GM12878 (cell line): ENCODE measurements at regions of chr1 and their contacts with region 1.

Region 1: DNA sequence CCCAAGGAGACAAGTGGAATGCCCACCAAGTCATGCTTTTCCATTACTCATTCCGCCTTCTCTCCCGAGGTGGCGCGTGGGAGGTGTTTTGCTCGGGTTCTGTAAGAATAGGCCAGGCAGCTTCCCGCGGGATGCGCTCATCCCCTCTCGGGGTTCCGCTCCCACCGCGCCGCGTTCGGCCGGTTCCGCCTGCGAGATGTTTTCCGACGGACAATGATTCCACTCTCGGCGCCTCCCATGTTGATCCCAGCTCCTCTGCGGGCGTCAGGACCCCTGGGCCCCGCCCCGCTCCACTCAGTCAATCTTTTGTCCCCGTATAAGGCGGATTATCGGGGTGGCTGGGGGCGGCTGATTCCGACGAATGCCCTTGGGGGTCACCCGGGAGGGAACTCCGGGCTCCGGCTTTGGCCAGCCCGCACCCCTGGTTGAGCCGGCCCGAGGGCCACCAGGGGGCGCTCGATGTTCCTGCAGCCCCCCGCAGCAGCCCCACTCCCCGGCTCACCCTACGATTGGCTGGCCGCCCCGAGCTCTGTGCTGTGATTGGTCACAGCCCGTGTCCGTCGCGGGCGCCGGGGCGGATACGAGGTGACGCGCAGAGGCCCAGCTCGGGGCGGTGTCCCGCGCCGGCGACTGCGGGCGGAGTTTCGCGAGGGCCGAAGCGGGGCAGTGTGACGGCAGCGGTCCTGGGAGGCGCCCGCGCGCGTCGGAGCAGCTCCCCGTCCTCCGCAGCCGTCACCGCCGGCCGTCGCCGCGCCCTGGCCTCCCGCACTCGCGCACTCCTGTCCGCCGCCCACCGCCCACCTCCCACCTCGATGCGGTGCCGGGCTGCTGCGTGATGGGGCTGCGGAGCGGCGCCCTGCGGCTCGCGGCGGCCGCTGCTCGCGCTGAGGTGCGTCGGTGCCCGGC is at the start of gene KIF1B:
- DNase-seq: peak; percentile 87
- ATAC-seq: peak; percentile 99
- H3K4me3 ChIP-seq: peak within 1 kb of the TSS; percentile 90
- H3K27ac ChIP-seq: peak within 1 kb of the TSS; percentile 46
- H3K4me1 ChIP-seq: no peaks in the 10 kb centered on the region; the same call in 1 of the 2 replicates
- H3K27me3 ChIP-seq: no peaks in the 10 kb centered on the region
- CTCF ChIP-seq: peak; percentile 89 to 95 (median 95); a peak in 5 of 6 replicates
- EP300 ChIP-seq: no peak
- POLR2A ChIP-seq: peak; percentile 85
- RAD21 ChIP-seq: peak; percentile 65
- polyA plus RNA-seq, gene KIF1B: 2.1 to 2.2 TPM

Region 2: DNA sequence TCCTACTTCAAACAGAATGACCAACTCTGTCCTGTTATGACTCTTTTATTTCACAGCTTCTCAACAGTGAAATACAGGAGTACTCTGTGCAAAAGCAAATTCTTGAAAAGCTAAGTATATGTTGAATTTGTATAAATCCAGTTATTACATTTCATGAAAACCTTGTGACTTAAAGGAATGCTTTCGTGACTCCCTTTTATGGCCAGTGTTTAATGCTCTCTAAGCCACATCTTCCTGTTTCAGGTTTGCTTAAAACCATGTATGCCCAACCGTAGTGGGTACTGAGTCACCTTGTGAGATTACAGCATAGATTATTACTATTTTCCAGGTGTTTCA is 40.0 kb before region 1 on chr1:
- CTCF ChIA-PET with region 1: interaction called, 21 read pairs
- POLR2A ChIA-PET with region 1: no interaction called
- RAD21 ChIA-PET with region 1: interaction called, 10 read pairs
- SMC1A ChIA-PET with region 1: interaction called, 12 read pairs
- in situ Hi-C with region 1: no loop called
- intact Hi-C with region 1: no loop called
- DNase-seq: peak; percentile 75
- ATAC-seq: peak; percentile 78
- H3K4me3 ChIP-seq: no peak overlapping the region
- H3K27ac ChIP-seq: peak overlapping the region; percentile 83
- H3K4me1 ChIP-seq: peaks cover 31% of the 10 kb centered on the region
- H3K27me3 ChIP-seq: no peaks in the 10 kb centered on the region
- CTCF ChIP-seq: no peak
- EP300 ChIP-seq: peak; percentile 33 to 46; a peak in 2 of 4 replicates
- POLR2A ChIP-seq: no peak
- RAD21 ChIP-seq: no peak

Region 3: DNA sequence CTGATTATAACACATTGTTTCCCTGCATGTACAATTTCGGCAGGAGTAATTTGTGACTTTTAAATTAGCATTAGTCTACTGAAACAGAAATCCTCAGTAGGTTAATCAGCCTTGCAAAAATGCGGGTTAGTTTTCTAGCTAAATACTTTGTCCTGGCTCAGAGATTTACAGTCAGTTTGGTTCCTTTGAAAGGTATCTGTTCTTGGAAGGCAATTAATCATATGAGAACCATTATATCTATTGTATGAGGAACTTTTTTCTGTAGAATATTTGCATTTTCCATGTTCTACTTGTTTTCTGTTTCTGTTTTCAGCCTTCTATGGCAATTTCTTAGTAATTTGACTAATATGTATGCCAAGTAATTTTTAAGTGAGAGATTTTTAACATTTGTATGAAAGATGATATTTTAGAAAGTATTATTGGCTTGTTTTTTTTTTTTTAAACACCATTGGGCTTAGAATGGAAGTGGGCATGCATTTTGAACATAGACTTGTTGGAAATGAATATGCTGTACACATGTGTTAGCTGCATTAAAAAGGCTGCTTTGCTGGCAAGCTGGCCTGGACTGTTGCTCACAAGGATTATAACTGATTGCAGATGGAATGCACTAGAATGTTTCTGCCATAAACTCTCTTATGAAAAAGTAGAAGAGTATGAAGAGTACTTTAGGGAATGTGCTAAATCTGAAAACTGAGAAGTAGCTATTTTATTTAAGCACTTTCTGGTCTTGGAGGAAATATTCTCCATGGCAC is 26.4 kb after region 1 on chr1:
- CTCF ChIA-PET with region 1: interaction called, 19 read pairs
- POLR2A ChIA-PET with region 1: interaction called, 6 read pairs
- RAD21 ChIA-PET with region 1: interaction called, 12 read pairs
- SMC1A ChIA-PET with region 1: interaction called, 9 read pairs
- in situ Hi-C with region 1: no loop called
- intact Hi-C with region 1: no loop called
- DNase-seq: no peak
- ATAC-seq: peak; percentile 77
- H3K4me3 ChIP-seq: no peak overlapping the region
- H3K27ac ChIP-seq: peak overlapping the region; percentile 32; the same call in 1 of the 2 replicates
- H3K4me1 ChIP-seq: peaks cover 16% of the 10 kb centered on the region
- H3K27me3 ChIP-seq: no peaks in the 10 kb centered on the region
- CTCF ChIP-seq: no peak
- EP300 ChIP-seq: no peak
- POLR2A ChIP-seq: no peak
- RAD21 ChIP-seq: no peak

Region 4: GRCh38 chr1:10308001-10308400 is 97.8 kb after region 1 on chr1:
- CTCF ChIA-PET with region 1: interaction called, 13 read pairs
- POLR2A ChIA-PET with region 1: no interaction called
- RAD21 ChIA-PET with region 1: interaction called, 5 read pairs
- SMC1A ChIA-PET with region 1: no interaction called
- in situ Hi-C with region 1: no loop called
- intact Hi-C with region 1: no loop called
- DNase-seq: no peak
- ATAC-seq: no peak; the same call in 2 of the 3 replicates
- H3K4me3 ChIP-seq: no peak overlapping the region
- H3K27ac ChIP-seq: no peak overlapping the region
- H3K4me1 ChIP-seq: no peaks in the 10 kb centered on the region; the same call in 1 of the 2 replicates
- H3K27me3 ChIP-seq: no peaks in the 10 kb centered on the region
- CTCF ChIP-seq: no peak
- EP300 ChIP-seq: no peak
- POLR2A ChIP-seq: no peak
- RAD21 ChIP-seq: no peak

Region 5: GRCh38 chr1:10338047-10338446 is 127.9 kb after region 1 on chr1:
- CTCF ChIA-PET with region 1: interaction called, 110 read pairs
- POLR2A ChIA-PET with region 1: interaction called, 3 read pairs
- RAD21 ChIA-PET with region 1: interaction called, 46 read pairs
- SMC1A ChIA-PET with region 1: interaction called, 57 read pairs
- in situ Hi-C with region 1: no loop called
- intact Hi-C with region 1: loop called (anchors 1 kb)
- DNase-seq: no peak
- ATAC-seq: peak; percentile 98
- H3K4me3 ChIP-seq: no peak overlapping the region
- H3K27ac ChIP-seq: no peak overlapping the region
- H3K4me1 ChIP-seq: no peaks in the 10 kb centered on the region
- H3K27me3 ChIP-seq: no peaks in the 10 kb centered on the region
- CTCF ChIP-seq: peak; percentile 86 to 87 (median 87)
- EP300 ChIP-seq: no peak
- POLR2A ChIP-seq: no peak
- RAD21 ChIP-seq: peak; percentile 95

Region 6: GRCh38 chr1:10430216-10431069 is 220.3 kb after region 1 on chr1 and contains the start of gene CENPS:
- CTCF ChIA-PET with region 1: interaction called, 17 read pairs
- POLR2A ChIA-PET with region 1: no interaction called
- RAD21 ChIA-PET with region 1: interaction called, 19 read pairs
- SMC1A ChIA-PET with region 1: interaction called, 3 read pairs
- in situ Hi-C with region 1: no loop called
- intact Hi-C with region 1: loop called (anchors 5 kb)
- DNase-seq: peak; percentile 51
- ATAC-seq: peak; percentile 89
- H3K4me3 ChIP-seq: peak within 1 kb of the TSS; percentile 93
- H3K27ac ChIP-seq: peak within 1 kb of the TSS; percentile 80
- H3K4me1 ChIP-seq: peaks cover 24% of the 10 kb centered on the region
- H3K27me3 ChIP-seq: no peaks in the 10 kb centered on the region
- CTCF ChIP-seq: peak; percentile 87 to 98 (median 93); a peak in 5 of 6 replicates
- EP300 ChIP-seq: no peak
- POLR2A ChIP-seq: peak; percentile 74
- RAD21 ChIP-seq: peak; percentile 51
- polyA plus RNA-seq, gene CENPS: 10.9 to 17.5 TPM